ENCODE measurements at regions of chr6 and their contacts with region 1.

Region 1: DNA sequence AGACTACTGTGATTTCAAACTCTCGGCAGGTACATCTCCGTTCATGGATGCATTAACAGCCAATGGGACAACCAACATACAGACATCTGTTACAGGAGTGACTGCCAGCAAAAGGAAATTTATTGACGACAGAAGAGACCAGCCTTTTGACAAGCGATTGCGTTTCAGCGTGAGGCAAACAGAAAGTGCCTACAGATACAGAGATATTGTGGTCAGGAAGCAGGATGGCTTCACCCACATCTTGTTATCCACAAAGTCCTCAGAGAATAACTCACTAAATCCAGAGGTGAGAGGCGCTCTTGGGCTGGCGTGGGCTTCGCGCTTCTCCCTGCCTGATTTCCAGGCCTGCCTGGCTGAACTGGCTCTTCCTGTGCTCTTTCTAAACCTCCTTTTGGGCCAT is 68.4 kb downstream of the RPP40 start:
- DNase-seq: no peak
- H3K4me3 ChIP-seq: no peak overlapping the region
- H3K27ac ChIP-seq: no peak overlapping the region
- H3K4me1 ChIP-seq: peaks cover 0 to 16% (median 9%) of the 10 kb centered on the region in 4 donors
- H3K27me3 ChIP-seq: no peaks in the 10 kb centered on the region
- CTCF ChIP-seq: no peak

Region 2: GRCh38 chr6:3721810-3722626 is 1213.5 kb before region 1 on chr6:
- intact Hi-C with region 1: no loop called
- DNase-seq: peak in 1 of 2 donors; percentile 44
- H3K4me3 ChIP-seq: no peak overlapping the region
- H3K27ac ChIP-seq: peak overlapping the region; percentile 64 to 75
- H3K4me1 ChIP-seq: peaks cover 0 to 62% (median 50%) of the 10 kb centered on the region in 4 donors
- H3K27me3 ChIP-seq: no peaks in the 10 kb centered on the region
- CTCF ChIP-seq: no peak

Region 3: DNA sequence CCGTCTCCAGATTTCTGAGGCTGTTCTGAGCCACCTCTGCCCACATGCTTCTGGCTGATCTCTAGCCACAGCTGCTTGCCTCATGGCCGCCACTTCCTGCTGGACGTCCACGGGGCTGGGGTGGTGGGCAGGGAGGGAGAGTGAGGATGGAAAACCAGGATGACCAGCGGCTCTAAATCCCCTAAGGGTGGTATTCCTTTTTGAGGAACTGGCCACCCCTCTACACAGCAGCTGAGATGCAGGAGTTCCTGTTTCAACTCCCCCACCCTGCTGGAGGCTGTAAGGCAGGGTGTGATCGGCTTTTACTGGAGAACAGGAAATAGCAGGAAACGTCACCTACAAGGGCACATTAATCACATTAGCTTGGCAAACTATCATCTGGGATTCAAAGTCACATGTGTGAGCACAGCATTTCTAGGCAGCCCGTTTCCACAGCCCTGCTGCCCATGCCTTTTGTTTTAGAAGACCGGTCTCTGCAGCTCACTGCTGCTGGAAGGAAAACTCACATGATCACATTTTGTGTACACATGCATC is 618.6 kb before region 1 on chr6:
- intact Hi-C with region 1: loop called (anchors 2 kb)
- DNase-seq: peak; percentile 56 to 72
- H3K4me3 ChIP-seq: no peak overlapping the region
- H3K27ac ChIP-seq: peak overlapping the region; percentile 38 to 49
- H3K4me1 ChIP-seq: peaks cover 0 to 31% (median 8%) of the 10 kb centered on the region in 4 donors
- H3K27me3 ChIP-seq: no peaks in the 10 kb centered on the region
- CTCF ChIP-seq: no peak

Measured in tibial artery (tissue), 4 donors.